Natural killer cell (primary cell): ENCODE measurements at regions of chr7 and their contacts with region 1.

Region 1: DNA sequence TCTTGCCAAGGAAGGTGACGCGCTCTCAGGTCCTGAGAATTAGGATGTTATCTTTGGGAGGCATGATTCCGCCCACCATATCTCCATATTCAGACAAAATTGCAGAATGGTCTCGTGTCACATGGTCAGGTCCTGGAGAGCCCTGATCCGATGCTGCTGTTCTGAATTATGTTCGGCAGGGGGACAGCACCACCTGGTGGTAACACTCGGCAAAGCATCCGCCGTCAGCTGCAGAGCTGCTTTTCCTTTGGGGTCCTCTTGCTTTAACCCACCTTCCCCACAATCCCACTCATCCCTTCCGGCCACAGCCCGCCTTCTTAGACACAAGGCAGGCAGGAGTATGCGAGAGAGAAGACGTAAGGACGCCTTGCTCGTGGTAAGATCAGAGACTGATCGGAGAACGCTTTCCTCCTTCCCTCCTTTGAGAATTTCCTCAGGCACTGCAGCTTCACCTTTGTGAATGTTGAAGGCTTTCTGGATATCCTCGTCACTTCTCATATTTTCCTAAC is 327.8 kb upstream of the C7orf33 start:
- DNase-seq: peak; percentile 49 to 71
- ATAC-seq: peak; percentile 64 to 91 (median 69)
- H3K4me3 ChIP-seq: no peak overlapping the region
- H3K4me3 Mint-ChIP-seq: no peak overlapping the region
- H3K27ac ChIP-seq: no peak overlapping the region
- H3K27ac Mint-ChIP-seq: no peak overlapping the region
- H3K4me1 ChIP-seq: peaks cover 7% of the 10 kb centered on the region
- H3K4me1 Mint-ChIP-seq: peaks cover 11% of the 10 kb centered on the region in 2 donors
- H3K27me3 ChIP-seq: peaks cover 3% of the 10 kb centered on the region
- H3K27me3 Mint-ChIP-seq: peaks cover 9 to 17% of the 10 kb centered on the region in 2 donors
- CTCF ChIP-seq: peak; percentile 86

Region 2: GRCh38 chr7:147245292-147245691 is 1017.5 kb before region 1 on chr7:
- intact Hi-C with region 1: loop called (anchors 5 kb)
- DNase-seq: peak in 1 of 2 donors; percentile 2
- ATAC-seq: peak in 1 of 3 donors; percentile 42
- H3K4me3 ChIP-seq: no peak overlapping the region
- H3K4me3 Mint-ChIP-seq: no peak overlapping the region
- H3K27ac ChIP-seq: no peak overlapping the region
- H3K27ac Mint-ChIP-seq: no peak overlapping the region
- H3K4me1 ChIP-seq: peaks cover 3% of the 10 kb centered on the region
- H3K4me1 Mint-ChIP-seq: no peaks in the 10 kb centered on the region
- H3K27me3 ChIP-seq: no peaks in the 10 kb centered on the region
- H3K27me3 Mint-ChIP-seq: no peaks in the 10 kb centered on the region
- CTCF ChIP-seq: peak; percentile 33